Motor neuron (in vitro differentiated cells): ENCODE measurements at regions of chr9 and their contacts with region 1.

Region 1: GRCh38 chr9:35116898-35117551 is 1.4 kb upstream of the ATOSB start:
- ATAC-seq: peak; percentile 21 to 42 (median 32)
- H3K4me3 ChIP-seq: peak overlapping the region; percentile 47 to 72 (median 53)
- H3K27ac ChIP-seq: peak overlapping the region; percentile 36 to 79
- H3K4me1 ChIP-seq: peaks cover 11 to 17% of the 10 kb centered on the region in 2 donors

Region 2: DNA sequence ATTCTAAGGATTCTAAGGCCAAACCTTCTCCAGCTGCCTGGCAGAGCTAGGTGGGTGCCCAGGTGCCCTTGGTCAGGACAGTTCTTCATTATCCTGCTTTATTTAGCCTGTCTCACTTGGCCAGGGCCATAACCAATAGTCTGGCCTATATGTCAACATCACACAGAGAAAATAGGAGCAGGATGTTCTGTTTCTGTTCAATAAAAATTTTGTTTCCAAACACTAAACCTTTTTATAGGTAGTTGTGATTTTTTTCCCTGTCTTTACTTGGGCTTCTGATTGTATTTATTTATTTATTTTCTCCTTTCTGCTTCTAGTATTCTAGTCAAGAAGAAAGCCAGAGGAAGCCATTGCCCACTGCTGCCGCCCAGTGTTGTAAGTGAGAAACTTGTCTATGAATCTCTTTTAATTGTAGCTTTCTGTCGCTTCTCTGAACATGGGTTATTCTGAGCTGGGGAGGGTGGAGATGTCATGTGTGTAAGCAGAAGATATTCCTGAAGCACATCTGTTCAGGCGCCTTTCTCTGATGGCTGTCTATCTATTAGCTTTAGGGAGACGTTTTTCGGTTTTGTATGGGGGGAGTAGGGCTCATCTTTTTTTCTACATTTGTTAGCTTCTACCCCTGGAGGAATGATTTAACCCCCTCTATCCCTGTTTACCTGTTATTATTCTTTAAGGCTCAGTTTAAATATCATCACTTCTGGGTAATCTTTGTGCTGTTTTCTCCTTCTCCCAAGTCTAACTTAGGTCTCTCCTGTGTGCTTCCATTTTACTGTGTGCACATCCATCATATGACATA is 141.8 kb after region 1 on chr9:
- in situ Hi-C with region 1: loop called in 2 of 9 experiments (anchors 10 to 25 kb)
- ATAC-seq: peak; percentile 64 to 100 (median 79)
- H3K4me3 ChIP-seq: no peak overlapping the region
- H3K27ac ChIP-seq: no peak overlapping the region
- H3K4me1 ChIP-seq: peaks cover 15 to 17% of the 10 kb centered on the region in 2 donors

Region 3: GRCh38 chr9:35470894-35471293 is 353.9 kb after region 1 on chr9:
- in situ Hi-C with region 1: loop called in 4 of 9 experiments (anchors 25 kb)
- ATAC-seq: peak in 2 of 8 experiments; percentile 77 to 92
- H3K4me3 ChIP-seq: no peak overlapping the region
- H3K27ac ChIP-seq: no peak overlapping the region
- H3K4me1 ChIP-seq: no peaks in the 10 kb centered on the region

Region 4: GRCh38 chr9:35489313-35490154 is 372.5 kb after region 1 on chr9 and contains the start of gene RUSC2:
- in situ Hi-C with region 1: loop called in 3 of 9 experiments (anchors 25 kb)
- ATAC-seq: peak; percentile 70 to 91 (median 90)
- H3K4me3 ChIP-seq: peak within 1 kb of the TSS; percentile 42 to 82 (median 45)
- H3K27ac ChIP-seq: peak within 1 kb of the TSS; percentile 54 to 71
- H3K4me1 ChIP-seq: peaks cover 0 to 8% of the 10 kb centered on the region in 2 donors
- total RNA-seq, gene RUSC2: 12.7 to 42.1 (median 34.3) TPM